Spleen (tissue), 13 donors: ENCODE measurements at regions of chr16 and their contacts with region 1.

Region 1: GRCh38 chr16:4253394-4254150 is 11.7 kb upstream of the SRL start:
- DNase-seq: peak; percentile 100
- H3K4me3 ChIP-seq: peak overlapping the region; percentile 50 to 85 (median 56)
- H3K27ac ChIP-seq: peak overlapping the region; percentile 85 to 95 (median 92)
- H3K4me1 ChIP-seq: peaks cover 0 to 23% (median 12%) of the 10 kb centered on the region in 6 donors
- H3K27me3 ChIP-seq: no peaks in the 10 kb centered on the region
- CTCF ChIP-seq: no peak
- POLR2A ChIP-seq: peak in 1 of 3 donors; percentile 53

Region 2: GRCh38 chr16:4019371-4019791 is 234.2 kb before region 1 on chr16:
- intact Hi-C with region 1: no loop called
- DNase-seq: no peak
- H3K4me3 ChIP-seq: peak overlapping the region in 5 of 8 donors; percentile 7 to 53 (median 27)
- H3K27ac ChIP-seq: peak overlapping the region in 7 of 8 donors; percentile 38 to 81 (median 65)
- H3K4me1 ChIP-seq: peaks cover 0 to 47% (median 7%) of the 10 kb centered on the region in 6 donors
- H3K27me3 ChIP-seq: no peaks in the 10 kb centered on the region
- CTCF ChIP-seq: no peak
- POLR2A ChIP-seq: no peak

Region 3: DNA sequence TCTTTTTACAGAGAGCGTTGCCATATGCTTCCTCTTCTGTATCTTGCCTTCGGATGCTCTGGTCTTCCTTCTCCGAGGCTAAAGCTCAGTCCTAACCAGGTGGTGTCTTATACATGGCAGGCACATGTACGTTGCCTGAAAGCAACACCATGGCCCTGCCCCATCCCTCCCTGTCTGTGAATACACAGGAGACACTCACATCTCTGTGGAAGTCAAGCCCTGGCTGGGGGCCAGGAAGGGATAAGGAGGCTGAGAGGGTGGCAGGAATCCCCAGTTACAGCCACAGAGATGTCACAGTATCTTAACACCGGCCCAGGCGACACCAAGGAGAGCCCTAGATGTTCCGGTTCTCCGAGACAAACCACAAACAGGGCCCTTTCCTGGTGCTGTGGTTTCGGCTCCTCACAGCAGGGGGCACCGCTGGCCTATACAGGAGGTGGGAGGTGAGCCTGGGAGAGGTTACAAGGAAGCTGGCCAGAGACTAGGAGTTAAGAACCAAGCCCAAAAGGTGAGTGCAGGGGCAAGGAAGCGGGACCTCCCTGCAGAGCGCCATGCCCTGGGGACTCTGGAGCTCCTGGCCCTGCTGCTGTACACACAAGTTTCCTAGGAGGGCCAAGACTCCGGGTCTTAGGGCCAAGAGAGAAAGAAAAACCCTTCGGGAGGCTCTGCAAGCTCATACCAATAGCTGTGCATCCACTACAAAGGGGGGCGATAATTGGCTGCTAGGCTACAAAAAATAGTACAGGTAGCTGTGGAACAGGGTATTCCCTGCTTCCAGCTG is 53.4 kb before region 1 on chr16:
- intact Hi-C with region 1: loop called (anchors 10 kb)
- DNase-seq: no peak
- H3K4me3 ChIP-seq: no peak overlapping the region
- H3K27ac ChIP-seq: no peak overlapping the region
- H3K4me1 ChIP-seq: peaks cover 0 to 9% (median 6%) of the 10 kb centered on the region in 6 donors
- H3K27me3 ChIP-seq: no peaks in the 10 kb centered on the region
- CTCF ChIP-seq: peak in 10 of 11 experiments; percentile 25 to 68 (median 60)
- POLR2A ChIP-seq: no peak

Region 4: DNA sequence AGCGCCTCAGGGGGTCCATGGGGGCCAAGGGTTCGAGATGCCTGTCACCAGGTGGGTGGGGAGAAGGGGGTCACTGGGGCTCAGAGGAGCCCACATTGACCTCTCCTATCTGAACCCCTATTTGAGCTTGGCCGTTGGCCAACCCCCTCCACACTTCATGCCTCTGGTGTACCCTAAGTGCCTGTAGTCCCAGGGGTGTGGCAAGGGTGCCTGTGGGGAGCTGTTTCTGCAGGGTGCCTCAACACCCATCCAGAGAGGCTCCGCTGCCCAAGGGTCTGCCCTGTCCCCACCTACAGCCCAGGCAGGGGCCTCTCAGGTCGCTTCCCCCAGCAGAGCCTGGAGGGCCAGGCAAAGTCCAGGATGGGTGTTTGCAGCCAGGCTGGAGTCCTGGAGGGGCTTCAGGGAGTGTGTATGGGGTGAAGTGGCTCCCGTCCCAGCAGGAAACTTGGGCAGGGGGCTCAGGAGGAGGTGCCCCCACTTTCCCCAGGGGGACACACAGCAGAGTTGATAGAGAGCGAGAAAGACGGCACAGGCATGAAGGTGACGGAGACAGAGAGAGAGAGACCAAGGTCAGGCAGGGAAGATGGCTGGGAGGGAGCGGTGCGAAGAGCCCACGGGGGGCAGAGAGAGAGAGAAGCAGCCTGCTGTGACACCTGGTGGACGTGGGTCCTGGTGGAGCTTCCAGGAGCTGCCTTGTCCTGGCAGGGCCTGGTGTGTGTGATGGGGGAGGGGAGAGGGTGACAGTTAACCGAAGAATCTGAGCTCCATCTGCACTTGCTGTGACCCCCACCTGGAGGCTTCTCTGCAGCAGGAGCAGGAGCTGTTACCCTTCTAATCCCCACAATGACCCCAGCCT is 534.3 kb after region 1 on chr16 and contains the start of gene SEPTIN12:
- intact Hi-C with region 1: no loop called
- DNase-seq: no peak
- H3K4me3 ChIP-seq: no peak within 1 kb of the TSS
- H3K27ac ChIP-seq: no peak within 1 kb of the TSS
- H3K4me1 ChIP-seq: no peaks in the 10 kb centered on the region
- H3K27me3 ChIP-seq: no peaks in the 10 kb centered on the region
- CTCF ChIP-seq: no peak
- POLR2A ChIP-seq: no peak
- total RNA-seq, gene SEPTIN12: not detected